HEK293 (cell line): ENCODE measurements at regions of chr5 and their contacts with region 1.

Region 1: GRCh38 chr5:79702606-79703382 is 13.2 kb downstream of the CMYA5 start:
- H3K4me3 ChIP-seq: no peak overlapping the region
- H3K27ac ChIP-seq: no peak overlapping the region
- H3K4me1 ChIP-seq: no peaks in the 10 kb centered on the region
- CTCF ChIP-seq: no peak

Region 2: DNA sequence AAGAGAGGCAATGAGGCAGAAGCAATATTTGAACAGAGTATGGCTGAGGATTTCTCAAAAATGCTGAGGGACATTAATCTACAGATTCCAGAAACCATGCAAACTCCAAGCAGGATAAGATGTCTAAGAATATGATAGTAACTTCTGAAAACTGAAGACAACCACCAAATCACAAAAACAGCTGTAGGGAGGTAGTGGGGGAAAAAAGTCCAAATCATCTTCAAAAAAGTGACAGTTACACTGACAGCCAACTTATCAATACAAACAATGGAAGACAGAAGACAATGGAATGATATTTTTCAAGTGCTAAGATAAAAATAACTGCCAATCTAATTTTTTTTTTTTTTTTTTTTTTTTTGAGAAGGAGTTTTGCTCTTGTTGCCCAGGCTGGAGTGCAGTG is 17.3 kb after region 1 on chr5:
- CTCF ChIA-PET with region 1: interaction called, 11 read pairs
- POLR2A ChIA-PET with region 1: no interaction called
- H3K4me3 ChIP-seq: no peak overlapping the region
- H3K27ac ChIP-seq: no peak overlapping the region
- H3K4me1 ChIP-seq: no peaks in the 10 kb centered on the region
- CTCF ChIP-seq: no peak

Region 3: DNA sequence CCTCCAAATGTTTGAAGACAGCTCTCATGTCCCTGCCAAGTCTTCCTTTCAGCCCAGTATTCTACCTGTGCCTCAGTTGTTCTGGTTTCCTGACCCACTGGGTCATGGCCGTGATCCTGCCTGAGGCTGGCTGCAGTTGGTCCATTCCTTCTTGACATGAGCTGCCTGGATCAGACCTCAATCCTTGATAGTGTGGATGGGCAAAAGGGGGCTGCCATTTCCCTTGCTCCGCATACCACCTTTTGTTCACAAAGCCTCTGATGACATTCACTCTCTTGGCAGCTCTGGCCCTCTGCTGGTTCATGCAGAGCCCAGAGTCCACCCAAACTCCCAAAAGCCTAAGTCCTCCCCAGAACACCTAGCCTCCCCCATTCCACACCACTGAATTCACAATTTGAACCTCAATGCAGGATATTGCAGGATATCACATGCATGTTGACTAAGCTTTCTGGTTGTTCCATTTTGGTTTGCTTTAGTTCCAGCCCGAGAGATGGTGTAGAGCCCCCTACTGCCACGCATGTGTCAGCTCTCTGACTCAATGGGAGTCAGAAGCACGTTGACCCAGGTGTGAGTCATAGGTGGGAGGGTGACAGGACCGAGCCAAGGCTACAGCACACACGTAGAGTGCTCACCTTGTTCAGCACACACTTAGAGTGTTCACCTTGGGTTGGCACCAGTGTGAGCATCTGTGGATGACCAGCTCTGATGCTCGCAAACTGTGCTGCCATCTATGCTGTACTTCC is 151.1 kb after region 1 on chr5:
- CTCF ChIA-PET with region 1: interaction called, 10 read pairs
- POLR2A ChIA-PET with region 1: no interaction called
- H3K4me3 ChIP-seq: no peak overlapping the region
- H3K27ac ChIP-seq: no peak overlapping the region
- H3K4me1 ChIP-seq: no peaks in the 10 kb centered on the region
- CTCF ChIP-seq: no peak

Region 4: DNA sequence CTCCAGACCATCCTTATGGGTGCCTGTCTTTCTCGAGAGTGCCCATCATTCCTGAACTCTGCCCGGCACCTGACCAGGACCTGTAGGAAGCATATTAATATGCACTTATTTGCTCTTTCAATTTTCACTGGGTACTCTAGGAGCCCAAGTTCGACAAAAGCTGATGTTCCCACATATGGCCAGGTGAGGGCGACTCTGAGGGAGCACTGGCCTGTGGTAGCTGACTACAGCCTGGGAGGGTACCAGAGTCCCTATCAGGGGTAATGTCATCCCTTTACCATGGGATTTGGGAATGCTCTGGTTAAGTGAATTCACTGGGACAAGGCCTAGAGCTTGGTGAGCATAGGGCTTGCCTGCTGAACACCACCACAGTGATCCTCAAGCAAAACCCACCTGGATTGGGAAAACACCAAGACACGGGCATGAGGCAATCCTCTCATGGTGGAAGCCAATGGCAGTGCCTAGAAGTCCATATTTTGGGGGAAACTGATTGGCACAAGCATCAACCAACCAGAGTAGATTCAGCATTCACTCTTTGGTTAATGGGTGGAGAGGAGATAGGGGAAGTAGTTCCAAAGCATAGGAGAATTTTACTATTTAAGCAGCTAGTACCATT is 176.0 kb after region 1 on chr5:
- CTCF ChIA-PET with region 1: no interaction called
- POLR2A ChIA-PET with region 1: no interaction called
- H3K4me3 ChIP-seq: no peak overlapping the region
- H3K27ac ChIP-seq: no peak overlapping the region
- H3K4me1 ChIP-seq: no peaks in the 10 kb centered on the region
- CTCF ChIP-seq: no peak

Region 5: DNA sequence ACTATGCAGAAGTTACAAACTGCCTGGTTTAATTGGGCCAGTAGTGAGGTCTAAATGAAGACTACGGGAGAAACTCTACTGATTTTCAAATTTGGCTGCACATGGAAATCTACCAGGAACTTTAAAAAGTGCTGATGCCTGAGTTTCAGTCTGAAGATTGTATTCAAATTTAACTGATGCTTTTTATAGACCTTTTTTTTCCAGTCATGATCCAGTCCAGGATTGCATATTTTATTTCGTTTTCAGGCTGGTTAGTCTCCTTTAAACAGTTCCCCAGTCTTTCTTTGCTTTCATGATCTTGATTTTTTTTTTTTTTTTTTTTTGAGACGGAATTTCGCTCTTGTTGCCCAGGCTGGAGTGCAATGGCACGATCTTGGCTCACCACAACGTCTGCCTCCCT is 593.3 kb after region 1 on chr5:
- CTCF ChIA-PET with region 1: no interaction called
- POLR2A ChIA-PET with region 1: no interaction called
- H3K4me3 ChIP-seq: no peak overlapping the region
- H3K27ac ChIP-seq: no peak overlapping the region
- H3K4me1 ChIP-seq: no peaks in the 10 kb centered on the region
- CTCF ChIP-seq: no peak